Caco-2 (cell line): ENCODE measurements at regions of chr7 and their contacts with region 1.

Region 1: DNA sequence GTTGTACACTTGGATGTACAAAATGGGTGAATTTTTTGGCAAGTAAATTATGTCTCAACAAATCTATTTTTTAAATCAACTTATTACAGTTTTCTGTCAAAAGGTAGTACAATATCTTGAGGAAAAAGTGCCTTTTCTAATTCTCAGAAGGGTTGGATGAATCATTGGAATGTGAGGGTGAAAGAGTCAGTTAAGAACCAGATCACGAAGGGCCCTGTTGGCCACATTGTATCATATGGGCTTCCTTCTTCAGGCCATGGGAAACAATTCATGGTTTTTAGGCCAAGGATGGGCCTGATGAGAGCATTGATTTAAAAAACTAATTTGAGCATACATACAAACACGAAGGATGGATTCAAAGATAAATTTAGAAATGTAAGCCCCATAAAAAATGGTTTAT is 503.7 kb downstream of the TNS3 start:
- DNase-seq: no peak
- H3K4me3 ChIP-seq: no peak overlapping the region
- H3K4me3 Mint-ChIP-seq: no peak overlapping the region
- H3K27ac Mint-ChIP-seq: no peak overlapping the region
- H3K4me1 ChIP-seq: no peaks in the 10 kb centered on the region
- H3K4me1 Mint-ChIP-seq: no peaks in the 10 kb centered on the region
- H3K27me3 ChIP-seq: no peaks in the 10 kb centered on the region
- H3K27me3 Mint-ChIP-seq: peaks cover 21% of the 10 kb centered on the region
- CTCF ChIP-seq: no peak

Region 2: DNA sequence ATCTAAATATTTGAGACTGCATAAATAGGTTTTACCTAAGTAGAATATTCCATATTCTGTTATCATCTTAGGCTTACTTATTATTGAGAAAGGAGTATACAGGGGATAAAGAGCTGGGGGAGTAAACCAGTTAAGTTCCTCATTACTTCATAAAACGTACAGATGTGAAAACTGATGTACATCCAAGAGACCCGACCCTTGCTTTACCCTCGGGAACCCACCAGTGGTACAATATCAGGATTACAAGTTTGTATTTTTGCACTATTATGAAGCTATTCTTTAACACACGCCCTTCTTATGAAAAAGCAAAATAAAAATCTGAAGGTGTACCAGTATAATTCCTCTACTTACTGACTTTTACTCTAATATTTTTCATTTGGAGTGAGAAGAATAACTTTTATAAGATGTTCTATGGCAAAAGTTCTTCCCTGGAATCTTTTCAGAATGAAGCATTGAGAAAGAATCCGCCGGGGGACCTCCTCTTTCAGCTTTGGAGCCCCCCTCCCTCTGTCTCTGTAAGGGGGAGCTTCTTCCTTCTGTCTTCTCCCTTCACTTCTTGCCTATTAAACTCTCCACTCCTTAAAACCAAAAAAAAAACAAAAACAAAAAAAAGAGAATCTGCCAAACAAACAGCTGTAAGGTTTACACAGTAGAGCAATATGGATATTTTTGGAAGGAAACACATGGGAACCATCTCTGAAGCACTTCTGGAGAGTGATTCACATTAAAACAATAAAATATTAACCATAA is 46.3 kb before region 1 on chr7:
- CTCF ChIA-PET with region 1: no interaction called
- POLR2A ChIA-PET with region 1: no interaction called
- intact Hi-C with region 1: loop called (anchors 2 kb)
- DNase-seq: no peak
- H3K4me3 ChIP-seq: no peak overlapping the region
- H3K4me3 Mint-ChIP-seq: no peak overlapping the region
- H3K27ac Mint-ChIP-seq: no peak overlapping the region
- H3K4me1 ChIP-seq: no peaks in the 10 kb centered on the region
- H3K4me1 Mint-ChIP-seq: no peaks in the 10 kb centered on the region
- H3K27me3 ChIP-seq: peaks cover 1% of the 10 kb centered on the region; the same call in 1 of the 2 replicates
- H3K27me3 Mint-ChIP-seq: peaks cover 13% of the 10 kb centered on the region
- CTCF ChIP-seq: no peak